Activated CD4-positive, alpha-beta T cell treated with anti-CD3 and anti-CD28 coated beads for 36 hours (primary cell): ENCODE measurements at regions of chr3 and their contacts with region 1.

Region 1: GRCh38 chr3:40309418-40309924 is at the start of gene EIF1B:
- DNase-seq: peak; percentile 99
- ATAC-seq: peak; percentile 92
- H3K4me3 Mint-ChIP-seq: peak within 1 kb of the TSS; percentile 100
- H3K27ac Mint-ChIP-seq: peak within 1 kb of the TSS; percentile 99
- H3K4me1 Mint-ChIP-seq: peaks cover 25% of the 10 kb centered on the region
- H3K27me3 Mint-ChIP-seq: no peaks in the 10 kb centered on the region
- total RNA-seq, gene EIF1B: 35.1 to 39.2 TPM

Region 2: GRCh38 chr3:39051647-39052561 is 1257.6 kb before region 1 on chr3 and contains the starts of genes SCN11A and WDR48:
- CTCF ChIA-PET with region 1: no interaction called
- POLR2A ChIA-PET with region 1: no interaction called
- intact Hi-C with region 1: loop called in 1 of 2 experiments (anchors 5 kb)
- DNase-seq: peak; percentile 96
- ATAC-seq: peak; percentile 97
- H3K4me3 Mint-ChIP-seq: peak within 1 kb of the TSS; percentile 87
- H3K27ac Mint-ChIP-seq: peak within 1 kb of the TSS; percentile 97
- H3K4me1 Mint-ChIP-seq: peaks cover 45% of the 10 kb centered on the region
- H3K27me3 Mint-ChIP-seq: no peaks in the 10 kb centered on the region
- total RNA-seq, gene SCN11A: 0.07 to 0.09 TPM
- total RNA-seq, gene WDR48: 33.3 to 36.5 TPM

Region 3: DNA sequence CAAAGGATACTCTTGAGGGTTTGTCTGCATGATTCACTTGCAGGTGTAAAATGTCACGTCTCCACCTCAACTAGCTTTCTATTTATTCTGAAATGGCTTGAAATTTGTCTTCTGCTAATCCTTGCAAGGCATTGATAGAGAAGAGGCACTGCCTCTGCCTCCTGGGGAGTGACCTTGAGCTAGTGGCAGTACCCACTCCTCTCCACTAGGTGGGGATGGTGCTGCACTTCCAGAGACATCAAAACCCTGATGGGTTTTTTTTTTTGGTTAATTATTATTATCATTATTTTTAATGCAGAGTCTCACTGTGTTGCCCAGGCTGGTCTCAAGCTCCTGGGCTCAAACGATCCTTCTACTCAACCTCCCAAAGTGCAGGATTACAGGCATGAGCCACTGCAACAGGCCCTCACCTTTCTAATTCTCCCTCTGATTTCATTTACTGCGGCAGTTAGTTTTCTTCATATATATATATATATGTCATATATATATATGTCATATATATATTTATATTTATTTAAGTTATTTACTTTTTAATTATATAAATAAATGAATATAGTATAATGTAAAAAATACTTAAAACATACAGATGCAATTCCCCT is 117.5 kb before region 1 on chr3:
- CTCF ChIA-PET with region 1: interaction called, 113 read pairs
- POLR2A ChIA-PET with region 1: no interaction called
- intact Hi-C with region 1: no loop called
- DNase-seq: peak; percentile 72
- ATAC-seq: peak; percentile 57
- H3K4me3 Mint-ChIP-seq: no peak overlapping the region
- H3K27ac Mint-ChIP-seq: no peak overlapping the region
- H3K4me1 Mint-ChIP-seq: no peaks in the 10 kb centered on the region
- H3K27me3 Mint-ChIP-seq: no peaks in the 10 kb centered on the region

Region 4: GRCh38 chr3:40329071-40329470 is 19.6 kb after region 1 on chr3:
- CTCF ChIA-PET with region 1: interaction called, 10 read pairs
- POLR2A ChIA-PET with region 1: interaction called, 4 read pairs
- intact Hi-C with region 1: no loop called
- DNase-seq: no peak
- ATAC-seq: no peak
- H3K4me3 Mint-ChIP-seq: no peak overlapping the region
- H3K27ac Mint-ChIP-seq: no peak overlapping the region
- H3K4me1 Mint-ChIP-seq: peaks cover 3% of the 10 kb centered on the region
- H3K27me3 Mint-ChIP-seq: no peaks in the 10 kb centered on the region

Region 5: DNA sequence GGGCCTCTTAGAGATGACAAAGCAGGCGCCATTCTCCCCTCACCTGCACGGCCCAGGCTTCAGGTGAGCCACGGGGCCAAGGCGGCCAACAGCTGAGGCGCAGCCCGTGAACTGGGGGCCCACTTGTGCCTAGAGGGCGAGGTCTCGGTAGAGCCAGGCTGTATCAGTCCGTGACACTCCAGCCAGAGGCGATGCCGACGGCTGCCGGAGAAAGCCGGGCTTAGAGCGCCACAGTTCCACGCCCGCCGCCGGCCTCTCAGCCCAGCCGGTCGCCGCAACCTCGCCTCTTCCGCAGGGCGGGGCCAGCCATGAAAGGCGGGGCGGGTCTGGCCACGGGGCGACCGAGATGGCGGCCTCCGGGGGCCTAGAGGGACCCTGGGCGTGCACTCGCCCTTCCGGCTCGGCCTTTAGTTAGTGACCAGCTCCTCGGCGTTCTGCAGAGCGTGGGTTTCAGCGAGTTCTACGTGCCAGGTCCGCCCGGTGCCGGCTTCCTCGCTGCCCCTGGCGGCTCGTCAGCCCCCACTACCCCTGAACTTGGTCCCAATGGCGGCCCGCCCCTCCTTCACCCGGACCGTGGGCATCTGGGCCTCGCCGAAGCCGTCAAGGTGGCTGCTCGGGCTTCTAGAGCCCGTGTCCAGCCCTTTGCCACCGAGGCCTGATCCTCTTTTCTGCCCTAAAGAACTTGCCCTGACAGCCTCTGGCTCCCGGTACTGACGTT is 215.3 kb after region 1 on chr3 and contains the start of gene ZNF621:
- CTCF ChIA-PET with region 1: no interaction called
- POLR2A ChIA-PET with region 1: no interaction called
- intact Hi-C with region 1: loop called (anchors 1 kb)
- DNase-seq: peak; percentile 89
- ATAC-seq: peak; percentile 97
- H3K4me3 Mint-ChIP-seq: peak within 1 kb of the TSS; percentile 91
- H3K27ac Mint-ChIP-seq: peak within 1 kb of the TSS; percentile 94
- H3K4me1 Mint-ChIP-seq: peaks cover 24% of the 10 kb centered on the region
- H3K27me3 Mint-ChIP-seq: no peaks in the 10 kb centered on the region
- total RNA-seq, gene ZNF621: 17.8 to 18.7 TPM